ENCODE measurements at regions of chr11 and their contacts with region 1.

Region 1: GRCh38 chr11:61384271-61385242 is 7.8 kb upstream of the TMEM216 start:
- DNase-seq: no peak
- ATAC-seq: no peak
- H3K4me3 Mint-ChIP-seq: no peak overlapping the region
- H3K27ac Mint-ChIP-seq: no peak overlapping the region
- H3K4me1 Mint-ChIP-seq: peaks cover 5% of the 10 kb centered on the region
- H3K27me3 Mint-ChIP-seq: no peaks in the 10 kb centered on the region

Region 2: DNA sequence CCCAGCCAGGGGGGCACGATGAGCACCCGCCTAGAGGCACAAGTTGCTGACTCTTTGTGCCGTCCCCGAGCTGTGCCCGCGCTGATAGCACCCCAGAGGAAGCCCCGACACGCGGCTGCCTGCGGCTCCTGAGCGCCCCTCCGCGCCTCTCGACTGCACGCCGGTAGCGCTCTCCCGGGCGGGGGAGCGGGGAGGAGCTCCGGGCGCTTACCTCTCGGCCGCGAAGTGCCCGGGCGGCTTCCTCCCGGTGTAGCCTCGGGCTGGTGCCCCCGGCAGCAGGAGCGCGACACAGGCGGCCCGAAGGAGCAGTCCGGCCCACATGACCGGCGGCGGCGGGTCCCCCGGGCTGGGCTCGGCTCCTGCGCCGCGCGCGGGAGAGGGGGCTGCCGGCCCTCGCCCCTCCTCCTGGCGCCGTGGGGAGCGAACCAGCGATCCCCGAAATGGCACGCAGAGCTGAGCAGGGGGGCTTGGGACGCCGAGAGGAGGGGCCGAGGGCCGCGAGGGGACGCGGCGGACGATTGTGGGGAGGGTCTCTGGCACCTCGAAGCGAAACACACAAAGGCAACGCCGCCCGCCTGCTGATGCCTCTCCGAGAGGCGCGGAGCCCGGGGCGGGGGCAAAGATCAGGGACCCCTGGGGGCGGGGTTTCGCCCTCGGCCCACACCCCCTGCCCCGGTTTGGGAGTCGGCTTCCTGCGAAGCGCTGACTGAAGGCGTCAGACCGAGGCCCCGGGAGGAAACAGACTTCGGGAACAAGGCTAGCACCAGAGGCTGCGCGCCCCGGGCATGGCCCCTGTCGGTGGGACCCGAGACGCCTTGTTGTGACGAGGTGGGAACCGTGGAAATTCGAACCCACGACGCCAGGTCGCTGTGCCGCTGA is 89.6 kb before region 1 on chr11 and contains the start of gene VWCE:
- CTCF ChIA-PET with region 1: interaction called, 10 read pairs
- DNase-seq: peak; percentile 85
- ATAC-seq: peak; percentile 89
- H3K4me3 Mint-ChIP-seq: peak within 1 kb of the TSS; percentile 76
- H3K27ac Mint-ChIP-seq: peak within 1 kb of the TSS; percentile 72
- H3K4me1 Mint-ChIP-seq: peaks cover 41% of the 10 kb centered on the region
- H3K27me3 Mint-ChIP-seq: peaks cover 13% of the 10 kb centered on the region
- total RNA-seq, gene VWCE: 3.8 to 3.9 TPM

Region 3: DNA sequence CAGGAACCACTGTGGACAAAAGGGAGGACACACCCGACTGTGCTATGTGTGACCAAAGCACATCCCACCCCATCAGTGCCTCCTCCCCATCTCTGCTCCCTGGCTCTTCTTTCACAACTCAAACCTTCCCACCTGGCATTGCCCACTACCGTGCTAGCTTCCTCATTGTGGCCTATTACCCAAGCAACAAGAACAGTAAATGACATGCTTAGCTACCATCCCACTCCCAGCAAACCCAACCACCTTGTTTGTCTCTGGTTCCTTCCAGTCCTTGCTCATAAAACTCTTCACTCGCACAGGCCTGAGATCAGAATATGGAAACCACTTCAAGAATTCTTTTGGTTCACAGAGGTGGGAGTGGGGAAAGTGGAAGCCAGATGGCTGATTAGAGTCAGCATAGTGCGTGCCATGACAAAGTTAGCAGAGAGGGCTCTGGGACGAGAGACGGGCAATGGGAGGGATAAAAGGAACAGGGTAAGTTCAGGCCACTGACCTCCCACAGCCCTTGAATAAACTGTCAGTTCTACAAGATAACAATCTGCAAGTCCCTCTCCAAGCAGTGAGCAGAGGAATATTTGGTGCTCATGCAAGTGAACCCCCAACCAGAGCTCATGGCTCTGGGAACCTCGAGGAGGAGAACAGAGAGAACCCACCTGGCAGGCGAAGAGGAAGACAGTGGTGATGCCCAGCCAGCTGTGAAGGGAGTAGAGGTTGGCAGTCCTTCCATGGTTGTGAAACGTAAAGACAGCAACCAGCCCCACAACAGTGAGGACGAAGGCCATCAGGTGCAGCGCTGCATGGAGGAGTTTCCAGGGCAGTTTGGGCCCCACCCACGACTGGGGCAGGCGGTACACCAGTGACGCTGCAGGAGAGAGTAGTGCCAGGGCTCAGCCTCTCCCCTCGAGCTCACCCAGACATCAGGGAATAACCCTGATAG is 31.2 kb before region 1 on chr11:
- CTCF ChIA-PET with region 1: interaction called, 15 read pairs
- DNase-seq: no peak
- ATAC-seq: no peak
- H3K4me3 Mint-ChIP-seq: no peak overlapping the region
- H3K27ac Mint-ChIP-seq: no peak overlapping the region
- H3K4me1 Mint-ChIP-seq: peaks cover 4% of the 10 kb centered on the region
- H3K27me3 Mint-ChIP-seq: no peaks in the 10 kb centered on the region

Region 4: DNA sequence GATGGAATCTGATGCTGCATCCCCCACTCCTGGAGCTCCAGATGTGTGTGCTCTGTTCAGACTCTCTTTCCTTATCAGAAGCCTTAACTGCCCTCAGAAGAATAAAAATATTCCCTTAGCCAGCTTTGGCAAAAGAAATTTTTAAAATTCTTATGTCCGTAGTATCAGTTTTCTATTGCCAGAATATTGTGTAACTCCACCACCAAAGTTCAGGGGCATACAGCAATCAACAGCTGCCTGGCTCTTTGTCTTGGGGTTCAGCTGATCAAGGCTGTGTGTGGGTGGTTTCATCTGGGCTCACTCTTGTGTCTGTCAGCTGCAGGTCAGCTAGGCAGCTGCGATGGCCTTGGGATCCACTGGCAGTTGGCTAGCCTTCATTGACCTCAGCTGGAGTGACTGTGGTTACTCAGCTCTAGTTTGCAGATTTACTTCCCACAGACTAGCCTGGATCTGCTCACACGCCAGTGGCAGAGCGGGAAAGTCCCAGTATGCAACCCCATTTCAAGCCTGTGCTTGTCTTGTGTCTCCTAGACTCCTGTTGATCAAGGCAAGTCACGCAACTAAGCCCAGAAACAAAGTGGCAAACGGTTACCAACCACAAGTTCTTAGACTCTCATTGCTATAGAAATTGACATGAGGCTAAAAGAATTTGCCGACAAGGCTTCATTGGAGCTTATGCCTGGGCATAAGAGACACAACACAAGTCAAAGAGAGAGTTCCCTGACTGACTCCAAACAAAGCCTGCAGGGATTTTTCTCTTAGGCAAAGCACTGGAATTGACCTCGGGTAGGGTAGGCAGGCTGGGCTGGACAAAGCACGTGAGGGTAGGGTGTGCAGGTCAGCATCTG is 15.0 kb before region 1 on chr11:
- CTCF ChIA-PET with region 1: interaction called, 23 read pairs
- DNase-seq: no peak
- ATAC-seq: no peak
- H3K4me3 Mint-ChIP-seq: no peak overlapping the region
- H3K27ac Mint-ChIP-seq: peak overlapping the region; percentile 22
- H3K4me1 Mint-ChIP-seq: peaks cover 19% of the 10 kb centered on the region
- H3K27me3 Mint-ChIP-seq: no peaks in the 10 kb centered on the region

Region 5: GRCh38 chr11:61429691-61430582 is 45.4 kb after region 1 on chr11 and contains the starts of genes CPSF7 and SDHAF2:
- CTCF ChIA-PET with region 1: interaction called, 11 read pairs
- DNase-seq: peak; percentile 98
- ATAC-seq: peak; percentile 88
- H3K4me3 Mint-ChIP-seq: peak within 1 kb of the TSS; percentile 98
- H3K27ac Mint-ChIP-seq: peak within 1 kb of the TSS; percentile 100
- H3K4me1 Mint-ChIP-seq: peaks cover 61% of the 10 kb centered on the region
- H3K27me3 Mint-ChIP-seq: no peaks in the 10 kb centered on the region
- total RNA-seq, gene CPSF7: 103 to 118 TPM
- total RNA-seq, gene SDHAF2: 37.6 to 57.6 TPM